ENCODE measurements at regions of chr4 and their contacts with region 1.

Region 1: DNA sequence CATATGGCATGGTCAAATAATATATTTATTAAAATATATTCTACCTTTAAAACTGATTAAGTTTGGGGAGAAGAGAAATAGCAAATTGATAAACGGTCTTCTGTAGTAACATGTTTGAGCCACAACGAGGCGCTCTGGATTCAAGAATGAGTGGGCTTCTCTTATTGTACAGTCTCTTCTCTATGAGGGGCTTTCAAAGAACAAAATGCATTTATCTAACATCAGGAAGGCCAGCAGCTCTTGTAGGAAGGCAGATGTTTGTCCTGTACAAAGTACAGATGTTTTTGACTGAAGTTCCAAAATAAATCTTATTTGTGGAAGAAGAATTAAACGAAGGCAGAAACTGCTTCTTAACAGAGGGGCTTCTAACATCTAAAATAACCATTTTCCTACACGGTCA is 153.6 kb downstream of the RASL11B start:
- DNase-seq: peak in 1 of 2 experiments; percentile 46
- ATAC-seq: no peak
- H3K4me3 ChIP-seq: no peak overlapping the region
- H3K27ac ChIP-seq: no peak overlapping the region
- H3K4me1 ChIP-seq: peaks cover 24% of the 10 kb centered on the region
- CTCF ChIP-seq: peak; percentile 64
- EP300 ChIP-seq: no peak
- POLR2A ChIP-seq: no peak
- RAD21 ChIP-seq: peak; percentile 77

Region 2: DNA sequence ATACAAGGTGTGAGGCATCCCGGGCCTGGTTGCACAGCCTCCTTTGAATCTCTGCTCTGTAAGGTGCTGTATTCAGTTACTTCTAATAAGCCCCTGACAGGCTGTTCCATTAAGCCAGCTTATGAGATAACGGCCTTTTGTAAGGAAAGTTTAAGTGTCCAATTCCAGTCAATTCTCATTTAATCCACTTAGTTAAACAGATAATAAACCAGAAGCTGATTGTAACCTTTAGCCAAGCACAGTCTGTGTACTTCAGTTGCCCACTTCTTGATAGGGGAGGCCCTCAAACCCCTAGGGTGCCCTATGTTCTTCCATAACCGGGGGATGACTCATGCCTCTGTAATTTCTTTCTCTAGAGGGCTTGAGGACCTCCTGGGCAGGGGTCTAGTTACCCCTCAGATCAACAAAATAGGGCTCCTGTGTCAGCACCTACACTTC is 90.1 kb before region 1 on chr4:
- CTCF ChIA-PET with region 1: no interaction called
- POLR2A ChIA-PET with region 1: no interaction called
- DNase-seq: no peak
- ATAC-seq: no peak
- H3K4me3 ChIP-seq: no peak overlapping the region
- H3K27ac ChIP-seq: no peak overlapping the region
- H3K4me1 ChIP-seq: no peaks in the 10 kb centered on the region
- CTCF ChIP-seq: no peak
- EP300 ChIP-seq: no peak
- POLR2A ChIP-seq: no peak
- RAD21 ChIP-seq: no peak

Region 3: DNA sequence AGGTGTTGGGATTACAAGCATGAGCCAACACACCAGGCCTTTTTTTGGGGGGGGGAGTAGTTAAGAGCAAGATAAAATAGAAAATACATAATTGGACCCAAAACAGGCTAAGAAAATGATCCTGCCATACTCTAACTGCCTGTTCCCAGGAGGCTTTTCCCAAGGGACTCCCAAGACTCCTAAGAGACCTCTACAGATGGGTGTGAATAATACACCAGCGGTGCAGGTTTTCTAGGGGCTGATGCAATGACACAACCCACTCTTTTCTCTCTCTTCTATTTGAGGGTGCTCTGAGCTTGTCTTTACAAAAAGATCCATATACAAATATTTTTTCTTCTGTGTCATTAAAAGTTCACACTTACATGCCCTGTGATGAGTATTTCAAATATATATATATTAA is 36.7 kb before region 1 on chr4:
- CTCF ChIA-PET with region 1: no interaction called
- POLR2A ChIA-PET with region 1: no interaction called
- DNase-seq: no peak
- ATAC-seq: no peak
- H3K4me3 ChIP-seq: no peak overlapping the region
- H3K27ac ChIP-seq: no peak overlapping the region
- H3K4me1 ChIP-seq: no peaks in the 10 kb centered on the region
- CTCF ChIP-seq: no peak
- EP300 ChIP-seq: no peak
- POLR2A ChIP-seq: no peak
- RAD21 ChIP-seq: no peak

Region 4: DNA sequence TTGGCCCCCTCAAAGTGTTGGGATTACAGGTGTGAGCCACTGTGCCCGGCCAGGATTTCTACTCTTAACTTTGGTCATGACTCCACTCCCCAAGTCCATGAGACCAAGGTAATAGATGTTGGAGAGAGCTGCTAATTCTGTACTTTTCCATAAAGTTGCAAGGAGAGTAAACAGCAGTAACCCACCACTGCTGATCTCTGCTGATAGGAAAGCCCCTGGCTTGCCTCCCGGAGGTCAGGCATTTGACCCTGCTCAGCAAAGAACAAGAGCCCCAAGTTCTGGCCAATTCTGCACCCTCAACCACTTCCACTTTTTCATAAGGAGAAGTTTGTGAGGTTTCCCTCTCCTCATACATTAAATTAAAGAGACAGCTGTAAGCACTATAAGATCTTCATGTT is 10.5 kb before region 1 on chr4:
- CTCF ChIA-PET with region 1: interaction called, 14 read pairs
- POLR2A ChIA-PET with region 1: no interaction called
- DNase-seq: no peak
- ATAC-seq: no peak
- H3K4me3 ChIP-seq: no peak overlapping the region
- H3K27ac ChIP-seq: no peak overlapping the region
- H3K4me1 ChIP-seq: no peaks in the 10 kb centered on the region
- CTCF ChIP-seq: no peak
- EP300 ChIP-seq: no peak
- POLR2A ChIP-seq: no peak
- RAD21 ChIP-seq: no peak

Region 5: DNA sequence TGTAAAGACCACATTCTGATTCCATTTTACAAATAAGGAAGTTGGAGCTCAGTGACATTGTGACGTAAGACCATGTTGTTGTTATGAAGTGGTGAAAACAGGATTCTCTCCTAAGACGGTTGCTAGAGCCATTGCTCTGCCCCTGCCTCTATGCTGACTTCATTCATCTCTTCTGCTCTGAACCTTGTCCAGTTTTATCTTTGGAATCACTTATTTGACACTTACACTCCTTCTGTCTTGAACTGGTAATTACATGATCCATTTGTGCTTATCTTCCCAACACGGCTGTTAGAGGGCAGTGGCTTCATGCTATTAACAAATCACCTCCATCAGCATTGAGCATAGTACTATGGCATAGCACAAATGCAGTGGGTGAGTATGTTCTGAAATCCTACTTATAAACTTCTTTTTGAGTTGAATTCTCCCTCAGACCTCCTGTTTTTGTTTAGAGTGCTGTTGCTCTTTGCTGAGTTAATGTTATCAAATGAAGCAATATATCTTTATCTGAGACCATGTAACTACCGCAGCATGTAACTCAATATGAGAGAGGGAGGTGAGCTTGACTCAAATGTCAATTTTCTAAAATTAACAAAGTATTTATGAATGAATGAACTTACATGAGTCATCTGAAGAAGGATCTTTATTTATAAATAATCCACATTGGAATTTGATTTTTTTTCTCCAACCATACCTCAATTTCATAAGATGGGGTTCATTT is 24.2 kb after region 1 on chr4:
- CTCF ChIA-PET with region 1: no interaction called
- POLR2A ChIA-PET with region 1: no interaction called
- DNase-seq: no peak
- ATAC-seq: no peak
- H3K4me3 ChIP-seq: no peak overlapping the region
- H3K27ac ChIP-seq: no peak overlapping the region
- H3K4me1 ChIP-seq: no peaks in the 10 kb centered on the region
- CTCF ChIP-seq: no peak
- EP300 ChIP-seq: no peak
- POLR2A ChIP-seq: no peak
- RAD21 ChIP-seq: no peak

Region 6: DNA sequence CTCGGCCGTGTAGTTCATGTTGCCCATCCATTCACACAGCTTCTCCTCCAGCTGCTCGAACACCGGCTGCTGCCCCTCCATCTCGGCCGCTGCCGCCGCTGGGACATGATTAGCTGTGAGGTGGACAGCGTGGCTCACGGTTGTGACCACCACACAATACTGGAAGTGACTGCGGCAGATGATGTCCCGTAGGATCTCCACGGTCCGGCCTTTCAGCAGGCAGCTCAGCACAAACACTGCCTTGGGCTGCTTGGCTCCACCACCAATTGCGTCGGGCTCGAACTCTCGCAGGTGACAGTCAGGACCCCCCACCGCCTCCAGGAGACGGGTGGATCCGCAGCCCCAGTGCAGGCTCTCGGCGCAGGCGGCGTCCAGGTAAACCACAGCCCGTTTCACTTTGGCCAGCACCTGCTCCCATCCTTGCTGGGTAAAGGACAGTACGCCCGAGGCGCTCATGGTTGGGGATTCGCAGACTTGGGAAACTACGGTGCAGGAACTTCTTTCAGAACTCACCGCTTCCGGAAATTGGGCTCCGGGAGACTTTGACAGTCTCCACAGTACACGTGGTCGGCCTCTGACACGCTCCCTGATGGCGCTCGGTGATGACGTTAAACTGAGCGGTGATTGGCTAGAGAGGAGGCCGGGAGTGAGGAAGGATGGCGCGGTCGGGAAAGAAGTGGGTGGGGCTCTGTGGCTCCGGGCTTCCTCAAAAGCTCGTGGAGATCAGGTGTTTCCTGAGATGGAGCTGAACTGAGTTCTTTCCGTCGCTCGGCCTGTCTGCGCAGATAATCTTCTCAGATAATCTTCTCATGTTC is 350.0 kb after region 1 on chr4 and contains the start of gene SCFD2:
- CTCF ChIA-PET with region 1: no interaction called
- POLR2A ChIA-PET with region 1: no interaction called
- DNase-seq: peak; percentile 93 to 94
- ATAC-seq: peak; percentile 100
- H3K4me3 ChIP-seq: peak within 1 kb of the TSS; percentile 94
- H3K27ac ChIP-seq: peak within 1 kb of the TSS; percentile 77 to 84
- H3K4me1 ChIP-seq: peaks cover 2% of the 10 kb centered on the region; the same call in 2 of the 3 replicates
- CTCF ChIP-seq: no peak
- EP300 ChIP-seq: no peak
- POLR2A ChIP-seq: peak; percentile 48
- RAD21 ChIP-seq: no peak
- polyA plus RNA-seq, gene SCFD2: 10.8 and 12.1 TPM in 2 replicates